ENCODE measurements at regions of chr2 and their contacts with region 1.

Region 1: DNA sequence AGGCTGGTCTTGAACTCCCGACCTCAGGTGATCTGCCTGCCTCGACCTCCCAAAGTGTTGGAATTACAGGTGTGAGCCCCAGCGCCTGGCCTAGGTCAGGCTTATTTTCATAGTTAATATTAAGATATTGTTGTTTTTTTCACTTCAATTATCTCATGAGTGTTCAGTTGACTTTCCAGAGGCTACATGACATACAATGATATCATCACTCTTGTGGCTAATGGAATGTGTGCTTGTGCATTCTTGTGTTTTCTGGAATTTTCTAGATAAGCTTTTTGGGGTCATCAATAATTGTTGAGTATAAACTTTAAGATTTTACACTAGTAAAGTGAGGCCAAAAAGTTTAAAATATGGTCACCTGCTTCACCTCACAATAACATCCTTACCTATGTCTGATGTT is 180.9 kb downstream of the FIGN start:
- DNase-seq: no peak
- ATAC-seq: no peak
- H3K4me3 ChIP-seq: no peak overlapping the region
- H3K4me3 Mint-ChIP-seq: no peak overlapping the region
- H3K27ac ChIP-seq: no peak overlapping the region
- H3K27ac Mint-ChIP-seq: no peak overlapping the region
- H3K4me1 ChIP-seq: no peaks in the 10 kb centered on the region
- H3K4me1 Mint-ChIP-seq: no peaks in the 10 kb centered on the region
- H3K27me3 ChIP-seq: no peaks in the 10 kb centered on the region
- H3K27me3 Mint-ChIP-seq: no peaks in the 10 kb centered on the region
- CTCF ChIP-seq: no peak

Region 2: GRCh38 chr2:163565196-163565595 is 10.3 kb after region 1 on chr2:
- CTCF ChIA-PET with region 1: no interaction called
- POLR2A ChIA-PET with region 1: no interaction called
- intact Hi-C with region 1: loop called in 1 of 2 experiments (anchors 1 kb)
- DNase-seq: no peak
- ATAC-seq: no peak
- H3K4me3 ChIP-seq: no peak overlapping the region
- H3K4me3 Mint-ChIP-seq: no peak overlapping the region
- H3K27ac ChIP-seq: no peak overlapping the region
- H3K27ac Mint-ChIP-seq: no peak overlapping the region
- H3K4me1 ChIP-seq: no peaks in the 10 kb centered on the region
- H3K4me1 Mint-ChIP-seq: no peaks in the 10 kb centered on the region
- H3K27me3 ChIP-seq: no peaks in the 10 kb centered on the region
- H3K27me3 Mint-ChIP-seq: no peaks in the 10 kb centered on the region
- CTCF ChIP-seq: no peak

Measured in CD4-positive, alpha-beta T cell (primary cell).